HEK293 (cell line): ENCODE measurements at regions of chr19 and their contacts with region 1.

Region 1: GRCh38 chr19:47210689-47211316 is 20.2 kb downstream of the BBC3 start:
- H3K4me3 ChIP-seq: no peak overlapping the region
- H3K27ac ChIP-seq: no peak overlapping the region
- H3K4me1 ChIP-seq: peaks cover 3% of the 10 kb centered on the region; the same call in 1 of the 2 replicates
- CTCF ChIP-seq: peak; percentile 52; the same call in 1 of the 2 replicates

Region 2: DNA sequence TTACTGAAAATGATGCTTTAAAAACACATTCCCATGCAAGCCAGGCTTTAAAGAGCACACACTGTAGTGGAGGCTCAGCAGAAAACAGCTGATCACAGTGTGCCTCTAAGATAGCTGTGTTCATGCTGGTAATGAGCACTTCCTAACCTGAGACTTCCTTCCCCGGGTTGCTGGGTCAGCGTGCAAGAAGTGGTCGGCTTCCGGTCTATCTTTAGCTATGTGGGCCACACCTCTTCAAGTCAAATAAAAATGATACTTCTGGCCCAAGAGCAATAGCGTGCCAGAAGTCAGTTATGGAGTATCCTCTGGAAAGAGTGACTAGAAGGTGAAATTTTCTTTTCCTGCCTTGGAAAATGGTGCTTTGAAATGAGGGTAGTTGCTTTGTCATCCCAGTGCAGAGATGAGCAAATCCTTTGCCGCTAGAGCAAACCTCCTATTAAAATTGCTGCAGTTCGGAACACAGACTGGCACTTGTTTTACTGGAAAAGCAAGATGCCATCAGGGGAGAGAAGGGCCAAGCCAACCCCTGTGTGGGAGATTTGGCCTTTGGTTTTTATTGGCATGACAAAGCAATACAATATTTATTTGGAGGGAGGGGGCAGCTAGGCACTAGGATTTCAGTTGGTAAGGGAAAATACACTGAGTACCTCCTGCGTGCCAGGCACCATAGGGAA is 285.8 kb before region 1 on chr19:
- CTCF ChIA-PET with region 1: no interaction called
- POLR2A ChIA-PET with region 1: no interaction called
- H3K4me3 ChIP-seq: no peak overlapping the region
- H3K27ac ChIP-seq: peak overlapping the region; percentile 25; the same call in 1 of the 2 replicates
- H3K4me1 ChIP-seq: peaks cover 30% of the 10 kb centered on the region
- CTCF ChIP-seq: no peak

Region 3: GRCh38 chr19:47075179-47075810 is 135.5 kb before region 1 on chr19:
- CTCF ChIA-PET with region 1: interaction called, 13 read pairs
- POLR2A ChIA-PET with region 1: interaction called, 3 read pairs
- H3K4me3 ChIP-seq: no peak overlapping the region
- H3K27ac ChIP-seq: no peak overlapping the region
- H3K4me1 ChIP-seq: no peaks in the 10 kb centered on the region
- CTCF ChIP-seq: no peak

Region 4: DNA sequence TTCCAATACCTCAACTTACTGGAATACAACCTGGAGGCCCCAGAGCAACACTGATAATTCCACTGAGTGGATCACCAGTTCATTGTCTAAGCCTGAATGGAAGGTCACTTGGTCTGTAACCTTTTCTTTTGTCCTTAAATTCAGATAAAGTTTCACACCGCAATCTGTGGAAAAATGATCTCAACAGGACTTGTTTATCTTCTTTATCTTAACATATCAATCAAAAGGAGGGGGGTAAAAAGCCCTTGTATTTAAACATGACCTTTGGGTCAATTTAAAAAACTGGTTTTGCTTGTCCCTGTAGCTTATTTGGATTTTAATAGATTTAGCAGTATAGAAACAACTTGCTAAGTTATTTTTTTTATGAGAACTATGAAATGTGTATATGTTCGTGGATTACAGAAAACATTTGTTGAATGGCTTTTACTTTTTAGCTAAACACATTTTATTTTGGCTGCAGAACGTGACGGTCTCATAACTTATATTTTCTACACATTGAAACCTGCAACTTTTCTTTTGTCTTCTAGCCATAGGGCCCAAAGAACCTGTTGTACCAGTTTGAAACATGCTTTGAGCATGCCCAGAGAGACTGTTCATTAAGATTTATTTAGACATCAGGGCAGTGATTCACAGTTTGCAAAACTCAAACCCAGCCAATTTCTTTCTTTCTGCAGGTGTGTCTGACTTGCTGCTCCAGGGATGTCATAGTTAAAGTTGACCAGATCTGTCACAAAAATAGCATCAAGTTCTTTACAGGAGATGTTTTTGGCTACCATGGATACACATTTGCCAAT is 58.4 kb before region 1 on chr19:
- CTCF ChIA-PET with region 1: interaction called, 16 read pairs
- POLR2A ChIA-PET with region 1: no interaction called
- H3K4me3 ChIP-seq: no peak overlapping the region
- H3K27ac ChIP-seq: peak overlapping the region; percentile 12; the same call in 1 of the 2 replicates
- H3K4me1 ChIP-seq: peaks cover 7% of the 10 kb centered on the region
- CTCF ChIP-seq: no peak

Region 5: GRCh38 chr19:47190167-47190727 is 20.6 kb before region 1 on chr19:
- CTCF ChIA-PET with region 1: interaction called, 21 read pairs
- POLR2A ChIA-PET with region 1: no interaction called
- H3K4me3 ChIP-seq: no peak overlapping the region
- H3K27ac ChIP-seq: peak overlapping the region; percentile 52
- H3K4me1 ChIP-seq: peaks cover 30% of the 10 kb centered on the region
- CTCF ChIP-seq: no peak

Region 6: GRCh38 chr19:47197141-47197540 is 13.7 kb before region 1 on chr19:
- CTCF ChIA-PET with region 1: interaction called, 21 read pairs
- POLR2A ChIA-PET with region 1: no interaction called
- H3K4me3 ChIP-seq: no peak overlapping the region
- H3K27ac ChIP-seq: peak overlapping the region; percentile 37; the same call in 1 of the 2 replicates
- H3K4me1 ChIP-seq: no peaks in the 10 kb centered on the region
- CTCF ChIP-seq: no peak

Region 7: GRCh38 chr19:47225746-47226425 is 15.1 kb after region 1 on chr19:
- CTCF ChIA-PET with region 1: interaction called, 56 read pairs
- POLR2A ChIA-PET with region 1: interaction called, 101 read pairs
- H3K4me3 ChIP-seq: peak overlapping the region; percentile 91
- H3K27ac ChIP-seq: peak overlapping the region; percentile 92
- H3K4me1 ChIP-seq: peaks cover 26% of the 10 kb centered on the region
- CTCF ChIP-seq: no peak

Region 8: GRCh38 chr19:47231215-47231984 is 20.6 kb after region 1 on chr19:
- CTCF ChIA-PET with region 1: interaction called, 56 read pairs
- POLR2A ChIA-PET with region 1: interaction called, 101 read pairs
- H3K4me3 ChIP-seq: peak overlapping the region; percentile 17
- H3K27ac ChIP-seq: peak overlapping the region; percentile 95
- H3K4me1 ChIP-seq: peaks cover 26% of the 10 kb centered on the region
- CTCF ChIP-seq: 0 out of 2 replicates have a peak, but pooled peaks have one; percentile 30

Region 9: DNA sequence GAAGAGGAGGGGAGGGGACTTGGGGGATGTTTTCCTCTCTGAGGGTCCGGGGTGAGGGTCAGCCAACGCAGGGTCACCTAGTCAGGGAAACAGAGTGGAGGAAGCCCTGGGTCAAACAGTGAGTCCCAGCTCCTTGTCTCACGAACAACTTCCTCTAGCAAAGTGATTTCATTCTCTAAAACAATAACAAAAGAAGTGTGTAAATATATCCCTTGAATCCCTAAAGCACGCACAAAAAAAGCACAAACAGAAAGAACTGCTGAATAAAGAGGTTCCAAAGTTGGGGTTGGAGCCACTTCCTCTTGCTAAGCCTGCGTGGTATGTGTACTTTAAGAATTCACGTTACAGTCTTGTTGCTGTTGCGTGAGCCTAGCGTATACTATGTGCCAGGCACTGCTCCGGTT is 119.7 kb after region 1 on chr19:
- CTCF ChIA-PET with region 1: no interaction called
- POLR2A ChIA-PET with region 1: no interaction called
- H3K4me3 ChIP-seq: no peak overlapping the region
- H3K27ac ChIP-seq: no peak overlapping the region
- H3K4me1 ChIP-seq: no peaks in the 10 kb centered on the region
- CTCF ChIP-seq: no peak